ENCODE measurements at regions of chr11 and their contacts with region 1.

Region 1: DNA sequence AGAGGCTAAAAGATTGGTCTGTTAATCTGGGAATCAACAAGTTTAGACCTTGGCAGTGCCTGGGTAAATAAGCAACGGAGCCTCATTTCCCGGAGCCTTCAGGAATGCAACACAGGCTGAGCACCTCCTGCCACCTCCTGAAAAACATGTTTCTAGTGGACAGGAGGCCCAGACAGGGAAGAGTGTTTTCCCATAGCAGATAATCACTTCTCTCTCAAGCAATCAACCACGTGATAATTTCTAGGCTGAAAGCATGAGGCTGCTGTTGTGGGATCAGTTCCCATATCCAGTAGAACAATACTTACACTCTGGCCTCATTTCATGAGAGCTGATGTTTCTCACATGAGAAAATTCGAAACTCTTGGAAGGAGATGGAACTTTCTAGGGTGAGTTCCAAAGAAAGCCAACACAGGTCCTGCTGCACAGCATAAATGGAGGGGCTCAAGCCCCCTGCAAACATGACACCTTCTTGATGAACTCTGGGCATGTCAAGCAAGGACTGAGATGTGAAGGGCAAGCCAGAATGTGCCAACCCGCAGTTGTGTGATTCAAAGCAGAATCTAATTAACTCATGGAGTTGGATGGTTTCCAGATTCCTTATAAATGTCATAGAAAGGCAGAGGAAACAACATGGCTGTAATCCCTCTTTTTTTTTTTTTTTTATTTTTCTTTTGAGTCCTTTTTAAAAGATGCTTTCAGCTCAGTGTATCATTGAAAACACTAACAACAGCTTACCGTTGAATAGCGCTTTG is 228.5 kb upstream of the SESN3 start:
- DNase-seq: no peak
- ATAC-seq: no peak
- H3K4me3 ChIP-seq: no peak overlapping the region
- H3K4me3 Mint-ChIP-seq: no peak overlapping the region
- H3K27ac ChIP-seq: no peak overlapping the region
- H3K27ac Mint-ChIP-seq: no peak overlapping the region
- H3K4me1 ChIP-seq: peaks cover 13 to 20% of the 10 kb centered on the region in 2 donors
- H3K4me1 Mint-ChIP-seq: peaks cover 29% of the 10 kb centered on the region
- H3K27me3 ChIP-seq: no peaks in the 10 kb centered on the region
- H3K27me3 Mint-ChIP-seq: no peaks in the 10 kb centered on the region
- CTCF ChIP-seq: no peak

Region 2: DNA sequence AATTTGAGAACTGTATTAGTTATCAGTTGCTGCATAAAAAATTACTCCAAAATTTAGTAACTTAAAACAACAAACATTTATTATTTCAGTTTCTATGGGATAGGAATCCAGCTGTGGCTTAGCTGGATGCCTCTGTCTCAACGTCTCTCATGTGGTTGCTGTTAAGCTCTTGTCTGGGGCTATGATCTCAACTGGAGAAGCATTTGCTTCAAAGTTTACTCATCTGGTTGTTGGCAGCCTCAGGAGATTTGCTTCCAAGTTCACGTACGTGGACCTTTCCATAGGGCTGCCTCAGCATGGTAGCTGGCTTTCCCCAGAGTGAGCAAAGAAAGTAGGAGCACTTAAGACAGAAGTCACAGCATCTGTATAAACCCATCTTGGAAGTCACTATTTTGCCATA is 83.6 kb before region 1 on chr11:
- CTCF ChIA-PET with region 1: no interaction called
- POLR2A ChIA-PET with region 1: no interaction called
- intact Hi-C with region 1: no loop called
- DNase-seq: no peak
- ATAC-seq: no peak
- H3K4me3 ChIP-seq: no peak overlapping the region
- H3K4me3 Mint-ChIP-seq: no peak overlapping the region
- H3K27ac ChIP-seq: no peak overlapping the region
- H3K27ac Mint-ChIP-seq: no peak overlapping the region
- H3K4me1 ChIP-seq: no peaks in the 10 kb centered on the region
- H3K4me1 Mint-ChIP-seq: peaks cover 6% of the 10 kb centered on the region
- H3K27me3 ChIP-seq: no peaks in the 10 kb centered on the region
- H3K27me3 Mint-ChIP-seq: peaks cover 4% of the 10 kb centered on the region
- CTCF ChIP-seq: no peak

Region 3: GRCh38 chr11:95435628-95436353 is 23.7 kb before region 1 on chr11:
- CTCF ChIA-PET with region 1: no interaction called
- POLR2A ChIA-PET with region 1: no interaction called
- intact Hi-C with region 1: no loop called
- DNase-seq: no peak
- ATAC-seq: no peak
- H3K4me3 ChIP-seq: no peak overlapping the region
- H3K4me3 Mint-ChIP-seq: no peak overlapping the region
- H3K27ac ChIP-seq: no peak overlapping the region
- H3K27ac Mint-ChIP-seq: no peak overlapping the region
- H3K4me1 ChIP-seq: no peaks in the 10 kb centered on the region
- H3K4me1 Mint-ChIP-seq: no peaks in the 10 kb centered on the region
- H3K27me3 ChIP-seq: peaks cover 0 to 6% (median 3%) of the 10 kb centered on the region in 4 experiments
- H3K27me3 Mint-ChIP-seq: peaks cover 13% of the 10 kb centered on the region
- CTCF ChIP-seq: no peak

Region 4: DNA sequence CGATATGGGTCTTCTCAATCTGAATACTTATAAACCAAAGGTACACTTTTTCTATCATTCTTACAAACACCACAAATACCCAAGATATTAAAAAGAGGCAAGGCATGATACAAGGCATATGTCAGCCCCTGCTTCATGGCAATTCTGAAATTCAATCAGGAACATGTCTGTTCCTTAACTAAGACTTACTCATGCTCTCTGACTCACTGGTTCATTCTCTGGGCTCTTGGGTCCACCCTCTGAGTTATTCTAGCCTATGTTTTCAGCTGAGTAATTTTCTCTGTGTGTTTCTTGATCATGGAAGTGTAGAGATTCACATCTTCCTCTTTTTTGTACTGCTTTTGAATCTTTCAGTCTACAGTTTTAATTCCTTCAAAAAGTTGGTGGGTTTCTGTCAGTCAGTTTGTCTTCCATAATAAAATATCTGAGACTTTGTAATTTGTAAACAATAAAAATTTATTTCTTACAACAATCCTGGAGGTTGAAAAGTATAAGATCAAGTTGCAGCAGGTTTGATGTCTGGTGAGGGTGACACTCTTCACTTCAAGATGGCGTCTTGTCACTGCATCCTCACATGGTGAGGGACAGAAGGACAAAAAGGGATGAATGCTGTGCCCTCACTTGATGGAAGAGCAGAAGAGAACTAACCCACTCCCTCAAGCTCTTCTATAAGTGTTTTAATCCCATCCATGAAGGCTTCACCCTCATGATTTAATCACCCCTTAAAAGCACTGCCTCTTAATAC is 118.4 kb after region 1 on chr11:
- CTCF ChIA-PET with region 1: no interaction called
- POLR2A ChIA-PET with region 1: no interaction called
- intact Hi-C with region 1: loop called (anchors 10 kb)
- DNase-seq: peak; percentile 19
- ATAC-seq: peak; percentile 80
- H3K4me3 ChIP-seq: no peak overlapping the region
- H3K4me3 Mint-ChIP-seq: no peak overlapping the region
- H3K27ac ChIP-seq: no peak overlapping the region
- H3K27ac Mint-ChIP-seq: peak overlapping the region; percentile 13
- H3K4me1 ChIP-seq: peaks cover 4% of the 10 kb centered on the region in 2 donors
- H3K4me1 Mint-ChIP-seq: peaks cover 15% of the 10 kb centered on the region
- H3K27me3 ChIP-seq: no peaks in the 10 kb centered on the region
- H3K27me3 Mint-ChIP-seq: no peaks in the 10 kb centered on the region
- CTCF ChIP-seq: no peak